Activated naive CD4-positive, alpha-beta T cell treated with anti-CD3 and anti-CD28 coated beads for 36 hours (primary cell): ENCODE measurements at regions of chrX and their contacts with region 1.

Region 1: DNA sequence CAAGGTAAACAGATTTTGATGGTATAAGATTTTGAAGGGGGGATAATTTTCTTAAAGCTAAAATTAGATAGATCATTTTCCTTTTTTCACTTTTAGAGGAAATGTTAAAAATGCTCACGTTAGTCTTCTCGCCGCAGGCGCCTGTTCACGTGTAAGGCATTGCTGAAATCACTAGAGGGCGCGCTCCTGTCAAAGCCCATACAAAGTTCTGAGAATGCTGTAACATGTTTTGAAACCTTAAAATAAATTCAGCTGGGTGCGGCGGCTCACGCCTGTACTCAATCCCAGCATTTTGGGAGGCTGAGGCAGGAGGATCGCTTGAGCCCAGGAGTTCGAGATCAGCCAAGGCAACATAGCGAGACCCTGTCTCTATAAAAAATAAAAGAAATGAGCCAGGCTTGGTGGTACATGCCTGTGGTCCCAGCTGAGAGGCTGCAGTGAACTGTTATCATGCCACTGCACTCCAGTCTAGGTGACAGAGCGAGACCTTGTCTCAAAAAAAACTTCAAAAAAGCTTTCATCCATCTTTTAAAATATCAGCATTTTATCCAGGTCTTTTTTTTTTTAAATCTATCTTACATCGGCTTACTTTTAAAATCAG is 138.0 kb downstream of the RBMX2 start:
- DNase-seq: peak; percentile 65
- H3K4me3 Mint-ChIP-seq: no peak overlapping the region
- H3K27ac Mint-ChIP-seq: no peak overlapping the region
- H3K4me1 Mint-ChIP-seq: no peaks in the 10 kb centered on the region
- H3K27me3 Mint-ChIP-seq: peaks cover 6% of the 10 kb centered on the region

Region 2: GRCh38 chrX:130330706-130331105 is 209.1 kb before region 1 on chrX:
- CTCF ChIA-PET with region 1: no interaction called
- intact Hi-C with region 1: loop called (anchors 1 kb)
- DNase-seq: peak; percentile 65
- H3K4me3 Mint-ChIP-seq: no peak overlapping the region
- H3K27ac Mint-ChIP-seq: no peak overlapping the region
- H3K4me1 Mint-ChIP-seq: no peaks in the 10 kb centered on the region
- H3K27me3 Mint-ChIP-seq: peaks cover 8% of the 10 kb centered on the region

Region 3: GRCh38 chrX:130710216-130710615 is 170.4 kb after region 1 on chrX:
- CTCF ChIA-PET with region 1: no interaction called
- intact Hi-C with region 1: no loop called
- DNase-seq: no peak
- H3K4me3 Mint-ChIP-seq: no peak overlapping the region
- H3K27ac Mint-ChIP-seq: no peak overlapping the region
- H3K4me1 Mint-ChIP-seq: no peaks in the 10 kb centered on the region
- H3K27me3 Mint-ChIP-seq: no peaks in the 10 kb centered on the region